Endothelial cell of umbilical vein (primary cell): ENCODE measurements at regions of chr1 and their contacts with region 1.

Region 1: DNA sequence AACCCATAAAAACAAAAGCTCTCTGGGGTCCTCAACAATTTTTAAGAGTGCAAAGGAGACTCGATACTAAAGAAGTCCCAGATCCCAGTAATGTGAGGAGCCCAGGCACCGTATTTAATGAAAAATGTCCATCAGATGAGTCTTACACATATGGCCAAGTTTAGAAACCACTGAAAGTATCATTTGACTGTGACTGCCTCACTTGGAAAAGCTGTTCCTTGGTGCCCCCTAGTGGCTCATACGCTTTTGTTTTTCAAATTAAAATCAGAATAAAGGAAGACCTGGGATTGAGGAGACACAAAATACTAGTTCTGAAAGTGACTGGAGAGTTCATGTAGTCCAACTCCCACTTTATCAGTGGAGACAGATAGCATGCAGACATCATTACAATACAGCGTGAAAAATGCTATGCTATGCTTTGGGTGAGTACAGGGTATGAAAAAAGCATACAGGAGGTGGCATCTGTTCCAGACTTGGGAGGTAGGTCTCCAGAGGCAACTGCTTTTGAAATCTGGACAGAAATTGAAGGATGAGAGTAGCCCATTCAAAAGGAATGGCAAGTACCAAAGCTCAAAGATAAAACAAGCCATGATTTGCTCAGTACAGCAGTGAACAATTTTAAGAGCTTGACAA is 33.8 kb downstream of the GDAP2 start:
- DNase-seq: peak; percentile 76
- H3K4me3 ChIP-seq: no peak overlapping the region
- H3K27ac ChIP-seq: no peak overlapping the region
- H3K4me1 ChIP-seq: no peaks in the 10 kb centered on the region
- H3K27me3 ChIP-seq: no peaks in the 10 kb centered on the region
- CTCF ChIP-seq: peak; percentile 58 to 68
- POLR2A ChIP-seq: no peak

Region 2: GRCh38 chr1:117534995-117535467 is 360.6 kb before region 1 on chr1:
- CTCF ChIA-PET with region 1: interaction called, 34 read pairs
- POLR2A ChIA-PET with region 1: no interaction called
- dilution Hi-C with region 1: no loop called
- intact Hi-C with region 1: loop called (anchors 1 kb)
- DNase-seq: peak; percentile 47
- H3K4me3 ChIP-seq: no peak overlapping the region
- H3K27ac ChIP-seq: no peak overlapping the region
- H3K4me1 ChIP-seq: no peaks in the 10 kb centered on the region
- H3K27me3 ChIP-seq: peaks cover 0 to 2% of the 10 kb centered on the region in 2 experiments
- CTCF ChIP-seq: peak; percentile 50 to 74
- POLR2A ChIP-seq: no peak

Region 3: DNA sequence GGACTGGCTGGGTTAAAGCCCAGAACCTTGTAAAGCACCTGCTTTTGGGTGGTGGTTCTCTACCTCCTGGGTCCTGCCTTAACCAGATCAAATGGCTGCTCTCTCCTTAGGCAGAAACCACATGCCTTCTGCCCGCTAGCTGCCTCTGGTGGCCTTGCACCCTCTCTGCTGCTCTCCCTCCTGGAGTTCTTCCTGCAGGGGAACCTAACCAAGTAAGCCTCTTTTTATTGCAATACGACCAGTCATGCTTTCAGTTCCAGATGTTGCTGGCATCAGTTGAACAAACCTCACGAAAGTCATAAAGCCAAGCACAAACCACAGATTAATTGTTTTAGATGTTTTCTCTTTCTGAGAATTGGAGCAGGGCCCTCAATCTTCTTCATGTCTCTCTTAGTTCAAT is 85.0 kb before region 1 on chr1:
- CTCF ChIA-PET with region 1: interaction called, 74 read pairs
- POLR2A ChIA-PET with region 1: no interaction called
- dilution Hi-C with region 1: no loop called
- intact Hi-C with region 1: no loop called
- DNase-seq: no peak
- H3K4me3 ChIP-seq: no peak overlapping the region
- H3K27ac ChIP-seq: no peak overlapping the region
- H3K4me1 ChIP-seq: no peaks in the 10 kb centered on the region
- H3K27me3 ChIP-seq: peaks cover 2 to 50% of the 10 kb centered on the region in 2 experiments
- CTCF ChIP-seq: no peak
- POLR2A ChIP-seq: no peak

Region 4: GRCh38 chr1:117879284-117879683 is 16.3 kb before region 1 on chr1:
- CTCF ChIA-PET with region 1: interaction called, 27 read pairs
- POLR2A ChIA-PET with region 1: no interaction called
- dilution Hi-C with region 1: no loop called
- intact Hi-C with region 1: no loop called
- DNase-seq: no peak
- H3K4me3 ChIP-seq: no peak overlapping the region
- H3K27ac ChIP-seq: no peak overlapping the region
- H3K4me1 ChIP-seq: peaks cover 2% of the 10 kb centered on the region
- H3K27me3 ChIP-seq: no peaks in the 10 kb centered on the region
- CTCF ChIP-seq: no peak
- POLR2A ChIP-seq: no peak

Region 5: DNA sequence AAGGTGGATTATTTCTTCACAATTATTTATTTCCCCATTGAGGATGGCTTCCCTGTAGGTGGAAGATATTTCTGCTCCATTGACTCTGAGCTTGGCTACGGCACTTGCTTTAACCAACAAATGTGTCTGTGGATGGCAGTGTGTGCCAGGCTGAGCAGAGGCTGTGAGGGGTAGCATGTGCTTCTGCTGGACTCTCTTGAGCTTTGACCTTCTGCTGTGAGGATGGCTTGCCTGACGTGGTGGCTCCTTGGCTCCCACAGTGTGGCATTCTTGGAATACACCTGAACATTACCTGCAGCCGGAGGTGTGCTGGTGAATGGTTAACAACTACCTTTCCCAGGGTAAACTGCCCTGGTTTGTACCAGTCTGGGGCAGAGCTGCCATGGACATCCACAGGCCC is 80.8 kb after region 1 on chr1:
- CTCF ChIA-PET with region 1: no interaction called
- POLR2A ChIA-PET with region 1: no interaction called
- dilution Hi-C with region 1: no loop called
- intact Hi-C with region 1: no loop called
- DNase-seq: no peak
- H3K4me3 ChIP-seq: no peak overlapping the region
- H3K27ac ChIP-seq: no peak overlapping the region
- H3K4me1 ChIP-seq: no peaks in the 10 kb centered on the region
- H3K27me3 ChIP-seq: peaks cover 0 to 5% of the 10 kb centered on the region in 2 experiments
- CTCF ChIP-seq: no peak
- POLR2A ChIP-seq: no peak

Region 6: DNA sequence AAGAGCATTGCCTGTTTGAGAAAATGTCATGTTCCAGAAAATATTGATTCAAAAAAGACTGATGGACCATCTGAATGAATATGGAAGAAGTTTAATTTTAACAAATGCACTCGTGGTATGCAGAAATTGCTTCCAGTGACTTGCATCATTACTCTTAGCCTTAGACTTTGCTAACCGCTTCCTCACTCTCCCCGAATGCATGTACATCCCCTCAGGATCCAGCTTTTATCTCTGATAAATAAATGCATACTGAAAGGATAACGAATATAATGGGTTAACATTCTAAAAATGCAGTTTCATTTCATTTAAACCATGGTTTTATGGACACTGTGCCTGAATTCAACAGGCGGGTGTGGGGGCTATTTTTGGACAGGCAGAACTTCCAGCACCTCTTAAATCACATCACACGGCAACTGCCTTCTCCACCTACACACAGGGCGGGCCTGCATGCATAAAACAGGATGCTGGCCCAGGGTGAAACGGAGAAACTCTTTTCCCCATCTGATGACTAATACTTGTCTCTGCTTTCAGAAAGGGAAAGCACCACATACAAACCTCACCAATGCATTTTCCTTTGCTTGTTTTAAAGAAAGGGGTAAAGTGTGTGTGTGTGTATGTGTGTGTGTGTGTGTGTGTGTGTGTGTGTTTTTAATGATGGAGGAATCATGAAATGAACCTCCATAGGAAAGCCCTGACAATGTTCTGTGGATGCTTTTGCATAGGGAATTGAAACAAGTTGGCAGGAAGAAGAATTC is 240.8 kb after region 1 on chr1:
- CTCF ChIA-PET with region 1: no interaction called
- POLR2A ChIA-PET with region 1: no interaction called
- dilution Hi-C with region 1: no loop called
- intact Hi-C with region 1: no loop called
- DNase-seq: no peak
- H3K4me3 ChIP-seq: no peak overlapping the region
- H3K27ac ChIP-seq: no peak overlapping the region
- H3K4me1 ChIP-seq: no peaks in the 10 kb centered on the region
- H3K27me3 ChIP-seq: no peaks in the 10 kb centered on the region
- CTCF ChIP-seq: no peak
- POLR2A ChIP-seq: no peak